ENCODE measurements at regions of chr3 and their contacts with region 1.

Region 1: DNA sequence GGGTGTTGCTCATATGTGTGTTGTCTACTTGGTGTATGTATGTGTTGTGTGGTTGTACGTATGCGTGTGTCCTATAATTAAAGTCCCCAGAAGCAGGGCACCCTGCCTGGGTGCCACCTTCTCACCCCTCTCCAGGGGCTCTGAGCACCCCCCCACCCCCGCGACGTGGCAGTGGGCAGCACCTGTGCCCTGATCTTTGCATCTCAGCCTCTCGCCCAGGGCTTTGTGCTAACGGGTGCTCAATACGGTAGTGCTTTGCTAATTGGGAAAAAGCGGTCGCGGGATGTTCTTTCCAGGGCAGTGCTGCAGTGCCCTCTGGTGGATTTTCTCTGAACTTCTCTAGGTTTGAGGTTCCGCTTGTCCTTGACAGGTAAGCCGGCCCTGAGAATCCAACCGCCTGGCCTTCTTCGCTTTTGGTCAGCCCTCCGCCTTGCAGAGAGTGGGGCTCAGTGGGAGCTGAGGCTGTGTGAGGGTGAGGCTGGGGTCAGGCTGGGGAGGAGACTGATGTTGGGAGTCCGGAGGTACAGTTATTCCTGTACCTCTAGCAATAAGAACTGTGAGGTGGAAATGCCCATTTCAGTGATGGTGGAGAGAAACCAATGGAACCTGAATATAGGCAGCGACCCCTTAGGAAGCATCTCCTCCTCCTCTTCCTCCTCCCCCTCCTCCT is 17.6 kb upstream of the EPHB3 start:
- DNase-seq: peak in 4 of 5 donors; percentile 50 to 73 (median 68)
- ATAC-seq: peak; percentile 35 to 81 (median 80)
- H3K4me3 ChIP-seq: no peak overlapping the region
- H3K27ac ChIP-seq: no peak overlapping the region
- H3K4me1 ChIP-seq: peaks cover 0 to 22% (median 3%) of the 10 kb centered on the region in 12 donors
- H3K27me3 ChIP-seq: peaks cover 0 to 32% (median 11%) of the 10 kb centered on the region in 9 donors
- CTCF ChIP-seq: peak; percentile 83 to 96 (median 92)
- POLR2A ChIP-seq: no peak

Region 2: DNA sequence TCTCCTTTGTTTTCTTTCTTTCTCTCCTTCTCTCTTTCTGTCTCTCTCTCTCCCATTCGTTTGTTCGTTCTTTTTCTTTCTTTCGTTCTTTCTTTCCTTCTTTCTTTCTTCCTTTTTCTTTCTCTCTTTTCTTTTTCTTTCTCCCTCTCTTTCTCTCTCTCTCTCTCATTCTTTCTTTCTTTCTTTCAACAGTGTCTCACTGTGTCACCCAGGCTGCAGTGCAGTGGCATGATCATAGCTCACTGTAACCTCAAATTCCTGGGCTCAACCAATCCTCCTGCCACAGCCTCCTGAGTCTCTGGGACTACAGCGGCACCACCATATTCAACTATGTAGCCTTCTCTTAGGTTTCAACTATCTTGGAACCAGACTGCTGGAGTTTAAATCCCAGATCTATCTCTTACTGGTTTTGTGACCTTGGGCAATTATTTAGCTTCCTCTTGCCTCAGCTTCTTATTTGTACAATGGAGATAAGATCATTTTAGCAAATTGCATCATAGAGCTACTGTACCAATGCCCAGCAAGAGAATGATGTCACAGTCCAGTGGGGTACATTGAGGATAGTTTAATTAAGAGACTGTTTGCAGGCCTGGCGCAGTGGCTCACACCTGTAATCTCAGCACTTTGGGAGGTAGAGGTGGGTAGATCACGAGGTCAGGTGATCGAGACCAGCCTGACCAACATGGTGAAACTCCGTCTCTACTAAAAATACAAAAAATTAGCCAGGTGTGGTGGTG is 632.0 kb before region 1 on chr3:
- intact Hi-C with region 1: no loop called
- DNase-seq: no peak
- ATAC-seq: no peak
- H3K4me3 ChIP-seq: no peak overlapping the region
- H3K27ac ChIP-seq: no peak overlapping the region
- H3K4me1 ChIP-seq: no peaks in the 10 kb centered on the region
- H3K27me3 ChIP-seq: no peaks in the 10 kb centered on the region
- CTCF ChIP-seq: no peak
- POLR2A ChIP-seq: no peak

Region 3: GRCh38 chr3:184371570-184372018 is 172.4 kb before region 1 on chr3:
- intact Hi-C with region 1: loop called (anchors 1 to 5 kb)
- DNase-seq: peak; percentile 71 to 88 (median 85)
- ATAC-seq: peak; percentile 78 to 91 (median 87)
- H3K4me3 ChIP-seq: no peak overlapping the region
- H3K27ac ChIP-seq: peak overlapping the region in 1 of 12 donors; percentile 10
- H3K4me1 ChIP-seq: peaks cover 0 to 32% (median 17%) of the 10 kb centered on the region in 12 donors
- H3K27me3 ChIP-seq: peaks cover 0 to 11% (median 4%) of the 10 kb centered on the region in 9 donors
- CTCF ChIP-seq: peak; percentile 88 to 97 (median 94)
- POLR2A ChIP-seq: no peak

Region 4: DNA sequence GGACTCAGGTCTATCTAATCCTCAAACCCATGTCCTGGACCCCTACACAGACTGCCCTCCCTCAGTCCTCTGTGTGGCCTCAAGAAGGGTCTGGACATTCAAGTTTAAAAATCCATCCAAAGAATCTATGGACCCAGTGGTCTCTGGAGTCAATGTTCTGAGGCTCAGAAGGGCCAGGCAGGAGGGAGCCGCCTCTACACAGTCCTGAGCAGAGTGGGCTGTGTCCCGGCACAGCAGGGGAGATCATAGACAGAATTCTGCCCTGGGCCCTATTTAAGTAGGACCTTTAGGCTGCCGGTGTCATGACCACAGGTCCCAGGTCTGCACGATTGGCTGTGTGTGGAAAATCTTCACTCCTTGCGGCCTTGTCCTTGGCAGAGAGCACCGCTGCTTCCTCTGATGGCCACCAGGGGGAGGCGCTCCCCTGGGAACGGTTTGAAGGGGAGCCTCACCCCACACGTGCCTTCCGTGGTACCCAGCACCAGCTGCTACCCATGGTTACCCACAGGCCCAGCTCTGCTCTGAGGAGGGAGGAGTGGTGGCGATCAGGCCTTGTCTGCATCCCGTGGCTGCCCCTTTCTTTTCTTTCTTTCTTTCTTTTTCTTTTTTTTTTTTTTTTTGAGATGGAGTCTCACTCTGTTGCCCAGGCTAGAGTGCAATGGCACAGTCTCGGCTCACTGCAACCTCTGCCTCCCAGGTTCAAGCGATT is 126.2 kb before region 1 on chr3:
- intact Hi-C with region 1: loop called in 7 of 10 experiments (anchors 2 to 5 kb)
- DNase-seq: peak; percentile 59 to 83 (median 69)
- ATAC-seq: peak; percentile 47 to 93 (median 90)
- H3K4me3 ChIP-seq: no peak overlapping the region
- H3K27ac ChIP-seq: no peak overlapping the region
- H3K4me1 ChIP-seq: peaks cover 0 to 4% (median 0%) of the 10 kb centered on the region in 12 donors
- H3K27me3 ChIP-seq: no peaks in the 10 kb centered on the region
- CTCF ChIP-seq: peak; percentile 63 to 88 (median 82)
- POLR2A ChIP-seq: no peak